PC-3 (cell line): ENCODE measurements at regions of chr3 and their contacts with region 1.

Region 1: DNA sequence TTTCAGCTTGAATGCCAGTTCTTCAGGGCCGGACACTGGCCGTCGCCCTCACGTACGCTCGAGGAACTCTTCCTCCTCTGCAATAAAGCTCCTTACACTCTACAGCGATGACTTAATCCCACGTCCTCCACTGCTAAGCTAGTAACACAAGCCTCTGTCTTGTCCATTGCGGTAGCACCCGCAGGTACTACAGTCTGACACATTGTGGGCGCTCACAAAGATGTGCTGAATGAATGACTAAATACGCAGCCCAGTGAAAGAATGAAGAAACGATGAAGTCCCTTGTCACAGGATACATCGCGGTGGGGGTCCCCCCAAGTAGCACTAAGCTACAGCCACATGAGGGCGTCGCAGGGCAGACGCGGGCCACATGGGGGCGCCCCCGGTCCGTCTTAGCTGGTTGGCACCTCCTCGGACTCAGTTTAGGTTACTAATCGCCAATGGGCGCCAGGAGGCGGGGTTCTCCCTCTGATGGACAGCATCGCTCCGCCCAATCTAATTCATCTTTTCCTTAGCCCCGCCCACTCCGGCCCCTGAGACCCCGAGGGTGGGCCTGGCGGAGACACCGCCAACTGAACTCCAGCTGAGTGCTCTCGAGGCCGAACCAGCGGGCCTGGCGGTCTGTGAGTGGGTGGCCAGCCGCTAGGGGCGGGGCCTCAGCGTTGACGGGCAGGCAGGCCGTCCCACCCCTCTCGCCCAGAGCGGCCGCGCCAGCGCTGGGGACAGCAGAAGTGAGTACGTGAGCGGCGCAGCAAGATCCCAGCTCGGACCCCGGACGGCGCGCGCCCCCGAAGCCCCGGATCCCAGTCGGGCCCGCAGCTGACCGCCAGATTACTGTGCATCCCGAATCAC is at the start of gene EPHB3:
- DNase-seq: peak; percentile 99
- ATAC-seq: peak; percentile 75
- H3K4me3 ChIP-seq: peak within 1 kb of the TSS; percentile 81
- H3K27ac ChIP-seq: peak within 1 kb of the TSS; percentile 75
- H3K4me1 ChIP-seq: peaks cover 62% of the 10 kb centered on the region
- H3K27me3 ChIP-seq: no peaks in the 10 kb centered on the region
- CTCF ChIP-seq: peak; percentile 100
- total RNA-seq, gene EPHB3: 18.2 and 23.1 TPM in 2 replicates

Region 2: DNA sequence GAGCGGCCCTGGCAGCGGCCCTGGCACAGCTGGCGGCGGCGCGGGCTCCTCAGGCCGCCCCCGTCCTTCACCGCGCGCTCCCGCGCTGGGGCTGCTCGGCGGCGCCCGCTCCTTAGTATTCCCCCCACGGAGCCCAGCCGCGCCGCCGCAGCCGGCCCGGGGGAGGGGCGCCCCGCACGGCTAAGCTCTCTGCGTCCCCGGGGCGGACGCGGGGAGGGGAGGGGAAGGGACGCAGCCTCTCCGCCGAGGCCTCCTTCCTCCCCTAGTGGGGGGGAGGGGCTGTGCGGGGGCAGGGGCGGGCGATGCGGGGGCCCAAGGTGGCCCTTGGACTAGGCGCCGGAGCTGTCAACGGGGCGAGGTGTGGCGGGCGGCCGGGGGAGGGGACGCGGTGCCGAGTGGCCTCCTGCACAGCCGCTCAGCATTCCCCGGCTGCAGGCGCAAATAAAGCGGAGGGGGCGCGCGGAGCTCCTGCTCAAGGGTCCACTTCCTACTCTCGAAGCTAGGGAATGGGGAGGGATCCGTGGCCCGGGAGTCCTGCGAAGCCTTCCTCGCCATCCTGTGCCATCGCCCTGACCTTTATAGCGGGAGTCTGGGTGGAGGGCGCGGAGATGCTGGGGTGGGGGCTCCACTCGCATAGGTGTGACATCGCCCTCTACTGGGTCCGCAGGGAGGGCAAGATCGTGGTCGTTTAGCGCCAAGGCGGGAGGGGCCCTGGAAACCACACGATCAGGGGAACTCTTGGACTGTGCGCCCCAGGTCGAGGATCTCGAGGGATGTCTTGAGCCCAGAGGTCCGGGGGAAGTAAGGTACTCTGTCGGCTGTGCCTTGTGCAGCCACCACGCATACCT is 22.5 kb after region 1 on chr3:
- CTCF ChIA-PET with region 1: no interaction called
- POLR2A ChIA-PET with region 1: no interaction called
- intact Hi-C with region 1: no loop called
- DNase-seq: no peak
- ATAC-seq: no peak
- H3K4me3 ChIP-seq: no peak overlapping the region
- H3K27ac ChIP-seq: no peak overlapping the region
- H3K4me1 ChIP-seq: no peaks in the 10 kb centered on the region
- H3K27me3 ChIP-seq: no peaks in the 10 kb centered on the region
- CTCF ChIP-seq: 0 out of 2 replicates have a peak, but pooled peaks have one; percentile 25

Region 3: DNA sequence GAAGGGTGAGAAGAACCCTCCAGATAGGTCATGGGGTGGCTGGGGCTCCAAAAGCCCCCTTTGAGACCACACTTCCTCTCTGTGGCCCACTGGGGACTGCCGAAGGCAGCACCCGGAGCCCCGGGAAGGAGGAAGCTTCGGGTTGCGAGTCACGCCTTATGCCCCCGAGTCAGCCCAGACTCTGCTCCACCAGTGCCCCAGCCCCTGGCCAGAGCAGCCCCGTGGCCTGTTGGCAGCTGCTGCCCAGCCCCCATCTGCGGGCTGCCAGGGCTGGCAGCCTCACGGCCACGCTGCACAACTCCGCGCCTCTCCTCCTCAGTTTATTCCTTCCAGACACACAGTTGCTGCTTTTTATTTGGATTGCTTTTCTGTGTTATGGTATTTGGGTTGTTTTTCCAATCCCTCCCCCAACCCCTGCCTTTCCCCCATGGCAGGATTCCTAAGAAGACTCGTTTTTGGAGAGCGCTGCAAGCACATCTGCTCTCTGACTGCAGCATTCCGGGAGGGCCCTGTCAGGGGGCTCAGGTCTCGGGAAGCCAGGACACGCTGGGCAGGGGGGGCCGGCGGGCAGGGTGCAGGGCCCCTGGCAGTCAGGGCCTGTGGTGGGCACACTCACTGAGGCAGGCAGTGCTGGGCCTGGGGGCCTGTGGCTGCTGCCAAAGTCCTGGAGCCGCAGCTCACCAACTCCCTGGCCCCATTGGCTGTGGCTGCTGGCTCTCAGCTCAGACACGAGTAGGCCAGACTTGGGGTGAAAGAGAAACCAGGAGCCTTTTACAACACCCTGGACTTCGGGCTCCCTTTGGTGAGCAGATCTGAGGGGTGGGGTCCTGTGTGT is 130.3 kb after region 1 on chr3:
- CTCF ChIA-PET with region 1: no interaction called
- POLR2A ChIA-PET with region 1: no interaction called
- intact Hi-C with region 1: no loop called
- DNase-seq: no peak
- ATAC-seq: no peak
- H3K4me3 ChIP-seq: no peak overlapping the region
- H3K27ac ChIP-seq: no peak overlapping the region
- H3K4me1 ChIP-seq: peaks cover 12% of the 10 kb centered on the region
- H3K27me3 ChIP-seq: no peaks in the 10 kb centered on the region
- CTCF ChIP-seq: no peak

Region 4: DNA sequence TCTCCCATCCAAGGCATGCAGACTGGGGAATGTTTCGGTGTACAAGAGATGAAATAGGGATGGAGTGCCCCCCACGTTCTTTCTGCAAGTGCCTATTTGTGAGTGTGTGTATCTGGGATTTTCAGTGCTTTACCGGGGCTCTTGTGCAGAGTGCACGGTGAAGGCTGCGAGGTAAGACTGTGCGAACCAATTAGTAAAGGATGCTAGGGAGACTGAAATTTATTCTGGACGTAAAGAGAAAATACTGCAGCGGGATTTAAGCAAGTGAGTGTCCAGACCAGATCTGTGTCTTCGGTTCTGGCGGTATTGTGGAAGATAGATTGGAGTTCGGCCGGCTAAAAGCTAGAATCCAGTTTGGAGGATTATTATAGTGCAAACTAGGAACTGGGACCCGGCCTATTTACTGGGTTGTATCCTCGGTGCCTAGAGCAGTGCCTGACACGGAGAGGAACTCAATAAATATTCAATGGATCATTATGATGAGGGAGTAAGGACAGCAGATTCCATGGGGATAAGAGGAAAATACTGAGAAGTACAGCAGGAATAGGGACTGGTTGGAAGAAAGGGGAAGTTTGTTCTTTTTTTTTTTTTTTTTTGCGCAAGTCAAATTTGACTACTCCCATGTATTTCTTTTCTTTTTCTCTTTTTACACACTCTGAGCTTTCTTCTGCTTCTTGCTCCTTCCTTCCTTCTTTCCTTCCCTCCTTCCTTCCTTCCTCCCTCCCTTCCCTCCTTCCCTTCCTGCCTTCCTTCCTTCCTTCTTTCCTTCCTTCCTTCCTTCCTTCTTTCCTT is 151.2 kb after region 1 on chr3:
- CTCF ChIA-PET with region 1: interaction called, 18 read pairs
- POLR2A ChIA-PET with region 1: interaction called, 3 read pairs
- intact Hi-C with region 1: loop called (anchors 1 kb)
- DNase-seq: no peak
- ATAC-seq: no peak
- H3K4me3 ChIP-seq: peak overlapping the region; percentile 96
- H3K27ac ChIP-seq: peak overlapping the region; percentile 74
- H3K4me1 ChIP-seq: peaks cover 34% of the 10 kb centered on the region
- H3K27me3 ChIP-seq: no peaks in the 10 kb centered on the region
- CTCF ChIP-seq: no peak

Region 5: GRCh38 chr3:184748219-184749135 is 187.2 kb after region 1 on chr3:
- CTCF ChIA-PET with region 1: interaction called, 11 read pairs
- POLR2A ChIA-PET with region 1: interaction called, 5 read pairs
- intact Hi-C with region 1: loop called (anchors 1 kb)
- DNase-seq: peak; percentile 70
- ATAC-seq: peak; percentile 99
- H3K4me3 ChIP-seq: no peak overlapping the region
- H3K27ac ChIP-seq: no peak overlapping the region
- H3K4me1 ChIP-seq: peaks cover 8% of the 10 kb centered on the region
- H3K27me3 ChIP-seq: 0 out of 2 replicates have a peak, but pooled peaks cover 4% of the 10 kb centered on the region
- CTCF ChIP-seq: peak; percentile 79

Region 6: DNA sequence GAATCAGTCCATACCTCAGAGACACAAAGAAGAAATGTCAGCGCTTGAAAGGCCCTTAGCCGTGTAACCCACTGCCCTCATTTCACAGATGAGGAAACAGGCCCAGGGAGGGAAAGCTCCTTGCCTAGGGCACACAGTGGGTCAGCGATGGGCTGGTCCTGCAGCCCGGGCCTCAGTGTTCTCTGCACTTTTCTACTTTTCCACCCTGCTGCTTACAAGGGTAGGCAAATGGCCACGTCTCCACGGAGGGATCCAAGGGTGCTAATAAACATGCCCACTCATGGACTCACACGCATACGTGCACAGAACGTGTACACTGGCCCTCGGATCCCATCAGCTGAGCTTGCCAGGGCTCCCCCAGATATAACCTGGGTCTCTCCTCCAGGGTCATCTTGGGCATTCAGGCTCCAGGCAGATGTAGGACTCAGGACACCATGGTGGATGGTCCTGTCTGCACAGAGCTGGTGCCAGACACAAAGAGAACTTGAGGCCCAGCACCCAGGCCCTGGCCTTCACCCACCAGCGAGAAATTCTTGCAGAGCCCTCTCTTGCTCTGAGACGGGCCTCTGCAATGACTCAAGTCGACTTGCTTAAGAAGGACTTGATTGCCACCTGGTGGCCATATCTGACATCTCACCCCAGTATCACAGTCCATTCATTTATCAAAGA is 216.2 kb after region 1 on chr3:
- CTCF ChIA-PET with region 1: interaction called, 3 read pairs
- POLR2A ChIA-PET with region 1: interaction called, 5 read pairs
- intact Hi-C with region 1: loop called (anchors 1 kb)
- DNase-seq: peak; percentile 94
- ATAC-seq: peak; percentile 96
- H3K4me3 ChIP-seq: no peak overlapping the region
- H3K27ac ChIP-seq: no peak overlapping the region
- H3K4me1 ChIP-seq: no peaks in the 10 kb centered on the region
- H3K27me3 ChIP-seq: no peaks in the 10 kb centered on the region
- CTCF ChIP-seq: peak; percentile 93